ENCODE measurements at regions of chr11 and their contacts with region 1.

Region 1: DNA sequence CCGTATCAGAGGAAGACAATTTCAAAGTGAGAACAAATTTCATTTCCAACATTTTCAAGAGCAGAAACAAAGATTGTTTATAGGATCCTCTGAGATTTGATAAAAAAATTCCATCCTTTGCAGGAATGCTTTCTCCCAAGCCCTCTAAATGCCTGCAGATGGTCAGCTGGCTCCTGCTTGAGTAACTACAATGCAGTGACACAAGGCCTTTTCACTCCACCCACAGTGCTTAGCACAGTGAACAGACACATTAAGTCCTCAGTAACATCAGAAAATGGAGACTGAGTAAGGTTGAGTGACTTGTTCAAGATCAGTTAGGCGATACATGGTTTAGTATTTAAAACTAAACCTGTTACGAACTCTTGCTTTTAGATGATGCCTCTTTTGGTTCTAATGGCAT is 527.1 kb upstream of the CCDC90B start:
- DNase-seq: no peak
- H3K4me3 ChIP-seq: no peak overlapping the region
- H3K27ac ChIP-seq: no peak overlapping the region
- H3K4me1 ChIP-seq: no peaks in the 10 kb centered on the region
- H3K27me3 ChIP-seq: no peaks in the 10 kb centered on the region
- CTCF ChIP-seq: no peak
- POLR2A ChIP-seq: no peak

Region 2: GRCh38 chr11:83241291-83241946 is 571.9 kb before region 1 on chr11:
- intact Hi-C with region 1: loop called in 1 of 2 experiments (anchors 5 kb)
- DNase-seq: peak; percentile 40 to 82 (median 52)
- H3K4me3 ChIP-seq: no peak overlapping the region
- H3K27ac ChIP-seq: no peak overlapping the region
- H3K4me1 ChIP-seq: peaks cover 0 to under 1% of the 10 kb centered on the region in 2 donors
- H3K27me3 ChIP-seq: no peaks in the 10 kb centered on the region
- CTCF ChIP-seq: peak; percentile 27 to 58 (median 50)
- POLR2A ChIP-seq: no peak

Region 3: GRCh38 chr11:83865636-83866461 is 52.6 kb after region 1 on chr11:
- intact Hi-C with region 1: no loop called
- DNase-seq: peak in 5 of 7 donors; percentile 21 to 70 (median 31)
- H3K4me3 ChIP-seq: no peak overlapping the region
- H3K27ac ChIP-seq: peak overlapping the region in 4 of 5 donors; percentile 23 to 74 (median 48)
- H3K4me1 ChIP-seq: peaks cover 14 to 34% of the 10 kb centered on the region in 2 donors
- H3K27me3 ChIP-seq: no peaks in the 10 kb centered on the region
- CTCF ChIP-seq: no peak
- POLR2A ChIP-seq: no peak